Left colon (tissue), 2 donors: ENCODE measurements at regions of chr12 and their contacts with region 1.

Region 1: DNA sequence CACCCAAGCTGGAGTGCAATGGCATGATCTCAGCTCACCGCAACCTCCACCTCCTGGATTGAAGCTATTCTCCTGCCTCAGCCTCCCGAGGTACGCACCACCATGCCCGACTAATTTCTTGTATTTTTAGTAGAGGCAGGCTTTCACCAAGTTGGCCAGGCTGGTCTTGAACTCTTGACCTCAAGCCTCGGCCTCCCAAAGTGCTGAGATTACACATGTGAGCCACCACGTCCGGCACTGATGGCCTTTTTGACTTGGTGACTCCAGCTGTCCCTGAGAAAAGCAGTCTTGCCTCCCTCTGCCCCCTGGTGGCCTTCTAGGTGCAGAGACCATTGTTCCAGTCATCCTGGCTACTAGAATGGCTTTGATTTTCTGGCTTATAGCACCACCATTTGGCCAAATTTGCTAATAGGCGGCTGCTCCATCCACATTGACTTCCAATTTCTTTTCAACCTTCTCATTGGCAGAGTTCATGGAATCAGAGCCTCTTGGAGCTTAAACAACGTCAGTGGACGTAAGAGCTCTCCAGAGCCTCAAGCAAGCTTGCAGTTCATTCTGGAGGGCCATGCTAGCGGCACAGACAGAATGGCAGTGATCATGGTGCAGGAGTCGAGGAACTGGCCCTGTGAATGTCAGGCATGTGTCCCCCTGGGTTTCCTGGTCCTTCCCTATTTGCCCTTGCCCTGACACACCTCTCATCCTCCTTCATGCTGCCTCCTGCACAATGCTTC is 25.4 kb upstream of the EIF4B start:
- DNase-seq: peak; percentile 86 to 92
- ATAC-seq: peak; percentile 88

Region 2: GRCh38 chr12:52582971-52583456 is 397.8 kb before region 1 on chr12:
- intact Hi-C with region 1: loop called in 1 of 2 experiments (anchors 10 kb)
- DNase-seq: peak in 1 of 2 donors; percentile 64
- ATAC-seq: peak; percentile 97

Region 3: DNA sequence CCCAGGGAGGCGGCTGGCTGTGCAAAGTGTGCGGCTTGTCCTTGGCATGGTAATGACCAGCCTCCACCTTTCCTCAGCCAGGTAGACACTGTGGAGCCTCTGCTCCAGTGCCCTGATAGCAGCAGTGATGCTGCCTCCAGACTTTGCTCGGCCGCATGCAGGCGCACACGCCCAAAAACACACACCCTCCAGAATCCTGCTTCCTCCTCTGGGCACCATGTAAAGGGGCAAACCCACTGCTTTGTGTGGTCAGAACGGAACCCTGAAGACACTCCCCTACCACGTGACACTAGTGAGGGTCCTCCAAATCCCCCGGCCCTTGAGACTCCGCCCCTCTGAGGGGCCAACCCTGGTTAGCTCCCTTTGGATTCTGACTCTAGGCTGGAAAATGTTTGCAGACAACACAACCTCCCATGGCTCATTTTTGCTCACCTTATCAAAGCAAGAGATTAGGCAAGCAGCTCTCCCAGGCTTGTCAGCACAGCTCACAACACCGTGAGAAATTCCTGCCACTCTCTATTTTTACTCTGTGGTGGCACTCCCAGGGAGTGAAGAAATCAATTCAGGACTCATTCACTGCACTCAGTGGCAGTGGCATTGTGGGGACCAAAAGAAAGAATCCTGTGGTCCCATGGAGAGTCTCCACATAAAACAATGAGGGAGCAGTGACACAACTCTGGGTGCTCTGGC is 282.1 kb before region 1 on chr12:
- intact Hi-C with region 1: no loop called
- DNase-seq: no peak
- ATAC-seq: peak; percentile 50

Region 4: GRCh38 chr12:52884526-52885293 is 96.1 kb before region 1 on chr12:
- intact Hi-C with region 1: loop called (anchors 2 to 5 kb)
- DNase-seq: peak; percentile 76 to 86
- ATAC-seq: peak; percentile 71

Region 5: GRCh38 chr12:53031617-53032016 is 50.8 kb after region 1 on chr12:
- intact Hi-C with region 1: no loop called
- DNase-seq: no peak
- ATAC-seq: peak; percentile 91

Region 6: GRCh38 chr12:53365245-53365904 is 384.5 kb after region 1 on chr12:
- intact Hi-C with region 1: no loop called
- DNase-seq: no peak
- ATAC-seq: peak; percentile 16